ENCODE measurements at regions of chr19 and their contacts with region 1.

Region 1: DNA sequence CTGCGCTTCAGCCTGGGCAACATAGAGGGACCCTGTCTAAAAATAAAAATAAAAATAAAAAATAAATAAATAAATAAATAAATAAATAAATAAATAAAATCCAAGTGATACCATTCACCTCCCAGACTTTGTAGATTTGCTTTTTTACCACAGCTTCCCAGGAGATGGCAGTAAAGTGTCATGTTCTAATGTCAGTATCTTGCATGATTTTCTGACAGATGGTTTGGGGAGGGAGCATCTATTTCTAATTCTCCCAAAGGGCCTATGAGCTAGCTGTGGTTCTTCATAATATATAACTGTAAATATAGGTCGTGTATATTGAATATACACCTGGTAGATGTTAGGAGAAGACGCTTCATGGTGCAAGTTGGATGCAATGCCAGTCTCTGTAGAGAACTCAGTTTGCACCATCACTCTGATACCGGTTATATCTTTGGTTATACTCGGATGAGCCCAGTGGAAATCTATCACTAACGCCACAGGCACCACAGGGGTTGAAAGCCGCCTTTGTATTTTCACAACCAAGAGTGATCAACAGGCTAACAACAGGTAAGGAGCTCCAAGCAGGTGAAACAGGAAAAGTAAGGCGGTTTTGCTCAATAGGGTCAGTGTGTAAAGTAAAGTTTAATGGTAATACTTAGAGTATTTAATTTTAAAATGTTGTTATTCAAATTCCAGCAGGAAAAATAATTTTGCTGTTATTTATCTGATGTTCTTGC is 13.9 kb downstream of the APLP1 start:
- DNase-seq: peak in 3 of 9 experiments; percentile 45 to 83 (median 75)
- ATAC-seq: peak; percentile 68
- H3K4me3 ChIP-seq: no peak overlapping the region
- H3K4me3 Mint-ChIP-seq: no peak overlapping the region
- H3K27ac ChIP-seq: no peak overlapping the region
- H3K27ac Mint-ChIP-seq: no peak overlapping the region
- H3K4me1 ChIP-seq: peaks cover 11% of the 10 kb centered on the region
- H3K4me1 Mint-ChIP-seq: peaks cover 8% of the 10 kb centered on the region
- H3K27me3 ChIP-seq: peaks cover 5 to 20% of the 10 kb centered on the region in 2 experiments
- H3K27me3 Mint-ChIP-seq: peaks cover 16% of the 10 kb centered on the region
- CTCF ChIP-seq: peak; percentile 81

Region 2: GRCh38 chr19:35693830-35694599 is 188.3 kb before region 1 on chr19:
- CTCF ChIA-PET with region 1: interaction called, 3 read pairs
- POLR2A ChIA-PET with region 1: no interaction called
- intact Hi-C with region 1: loop called in 1 of 2 experiments (anchors 1 kb)
- DNase-seq: peak; percentile 80 to 94 (median 91)
- ATAC-seq: peak; percentile 100
- H3K4me3 ChIP-seq: no peak overlapping the region
- H3K4me3 Mint-ChIP-seq: no peak overlapping the region
- H3K27ac ChIP-seq: no peak overlapping the region
- H3K27ac Mint-ChIP-seq: no peak overlapping the region
- H3K4me1 ChIP-seq: no peaks in the 10 kb centered on the region
- H3K4me1 Mint-ChIP-seq: no peaks in the 10 kb centered on the region
- H3K27me3 ChIP-seq: no peaks in the 10 kb centered on the region
- H3K27me3 Mint-ChIP-seq: no peaks in the 10 kb centered on the region
- CTCF ChIP-seq: peak; percentile 99

Region 3: DNA sequence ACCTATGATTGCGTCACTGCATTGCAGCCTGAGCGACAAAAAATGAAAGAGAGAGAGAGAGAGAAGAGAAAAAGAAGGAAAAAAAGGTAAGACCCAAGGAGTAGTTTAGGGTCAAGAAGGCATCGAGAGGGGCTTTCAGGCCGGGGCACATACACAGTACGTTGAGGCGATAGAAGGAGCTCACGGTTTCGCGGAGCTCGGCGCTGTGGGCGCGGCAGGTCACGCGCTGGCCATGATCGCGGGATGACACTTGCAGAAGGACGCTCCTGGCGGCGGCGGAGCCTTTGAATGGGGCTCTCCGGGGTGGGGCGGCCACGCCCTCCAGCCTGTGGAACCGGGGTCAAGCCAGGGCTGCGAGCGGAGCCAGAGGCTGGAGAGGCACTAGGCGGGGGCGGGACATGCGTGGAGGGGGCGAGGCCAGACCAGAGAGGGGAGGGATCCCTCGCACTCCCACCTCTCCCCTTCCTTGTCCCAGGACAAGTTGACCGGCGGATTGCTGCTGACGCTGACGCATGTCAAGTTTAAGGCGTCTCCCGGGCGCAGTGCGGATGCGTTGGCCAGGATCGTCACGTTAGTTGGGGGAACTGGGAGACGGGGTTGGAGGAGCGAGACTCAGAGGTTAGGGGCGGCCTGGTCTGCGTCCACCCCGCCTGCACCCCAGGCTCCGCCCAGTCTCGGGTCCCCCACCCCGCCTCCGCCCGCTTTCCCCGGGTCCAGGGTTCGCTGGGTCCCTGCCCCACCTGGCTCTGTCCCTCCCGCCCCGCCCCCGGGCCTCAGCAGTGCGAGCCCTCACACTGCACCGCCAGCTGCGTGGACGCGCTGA is 36.8 kb before region 1 on chr19:
- CTCF ChIA-PET with region 1: no interaction called
- POLR2A ChIA-PET with region 1: no interaction called
- intact Hi-C with region 1: no loop called
- DNase-seq: no peak
- ATAC-seq: peak; percentile 23
- H3K4me3 ChIP-seq: no peak overlapping the region
- H3K4me3 Mint-ChIP-seq: peak overlapping the region; percentile 79
- H3K27ac ChIP-seq: no peak overlapping the region
- H3K27ac Mint-ChIP-seq: no peak overlapping the region
- H3K4me1 ChIP-seq: peaks cover 7% of the 10 kb centered on the region
- H3K4me1 Mint-ChIP-seq: peaks cover 18% of the 10 kb centered on the region
- H3K27me3 ChIP-seq: peaks cover 21 to 32% of the 10 kb centered on the region in 2 experiments
- H3K27me3 Mint-ChIP-seq: peaks cover 58% of the 10 kb centered on the region
- CTCF ChIP-seq: no peak

Region 4: GRCh38 chr19:35869327-35870123 is 12.7 kb before region 1 on chr19:
- CTCF ChIA-PET with region 1: interaction called, 4 read pairs
- POLR2A ChIA-PET with region 1: interaction called, 3 read pairs
- intact Hi-C with region 1: loop called in 1 of 2 experiments (anchors 1 kb)
- DNase-seq: peak; percentile 51 to 89 (median 72)
- ATAC-seq: peak; percentile 94
- H3K4me3 ChIP-seq: peak overlapping the region; percentile 15 to 32
- H3K4me3 Mint-ChIP-seq: peak overlapping the region; percentile 74
- H3K27ac ChIP-seq: no peak overlapping the region
- H3K27ac Mint-ChIP-seq: no peak overlapping the region
- H3K4me1 ChIP-seq: peaks cover 21% of the 10 kb centered on the region
- H3K4me1 Mint-ChIP-seq: peaks cover 15% of the 10 kb centered on the region
- H3K27me3 ChIP-seq: peaks cover 24 to 30% of the 10 kb centered on the region in 2 experiments
- H3K27me3 Mint-ChIP-seq: peaks cover 33% of the 10 kb centered on the region
- CTCF ChIP-seq: no peak

Region 5: DNA sequence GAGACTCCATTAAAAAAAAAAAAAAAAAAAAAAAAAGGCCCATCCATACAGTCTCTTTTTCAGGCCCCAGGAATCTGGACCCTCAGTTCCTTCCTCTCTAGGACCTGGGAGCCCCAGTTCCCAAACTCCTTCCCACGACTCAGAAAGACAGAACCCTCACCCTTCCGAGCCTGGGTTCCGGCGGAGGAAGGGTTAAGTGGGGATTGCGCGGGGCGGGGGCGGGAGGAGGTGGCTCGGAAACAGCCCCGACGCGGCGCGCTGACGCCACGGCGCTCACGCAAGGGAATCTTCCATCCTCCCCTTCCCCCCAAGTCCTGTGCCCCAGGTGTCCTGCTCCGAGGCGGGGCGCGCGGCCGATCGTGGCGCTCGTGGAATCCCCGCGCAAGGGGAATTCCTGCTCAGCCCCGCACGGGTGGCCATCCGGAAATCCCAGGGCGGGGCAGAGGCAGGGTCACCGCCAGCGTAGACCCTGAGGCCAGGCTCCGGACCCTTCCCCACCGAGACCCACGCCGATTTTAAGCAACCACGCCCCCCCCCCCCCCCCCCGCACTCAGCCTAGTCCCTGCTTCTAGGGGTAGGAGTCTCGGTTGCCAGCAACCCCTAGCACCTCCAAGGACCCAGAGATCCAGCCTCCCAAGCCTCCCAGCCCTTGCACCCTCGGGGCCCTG is 17.4 kb after region 1 on chr19:
- CTCF ChIA-PET with region 1: interaction called, 15 read pairs
- POLR2A ChIA-PET with region 1: interaction called, 4 read pairs
- intact Hi-C with region 1: loop called (anchors 1 to 2 kb)
- DNase-seq: peak; percentile 68 to 97 (median 87)
- ATAC-seq: peak; percentile 59
- H3K4me3 ChIP-seq: peak overlapping the region; percentile 95 to 97
- H3K4me3 Mint-ChIP-seq: peak overlapping the region; percentile 100
- H3K27ac ChIP-seq: peak overlapping the region; percentile 85 to 99
- H3K27ac Mint-ChIP-seq: peak overlapping the region; percentile 95
- H3K4me1 ChIP-seq: peaks cover 45% of the 10 kb centered on the region
- H3K4me1 Mint-ChIP-seq: peaks cover 57% of the 10 kb centered on the region
- H3K27me3 ChIP-seq: no peaks in the 10 kb centered on the region
- H3K27me3 Mint-ChIP-seq: no peaks in the 10 kb centered on the region
- CTCF ChIP-seq: no peak

Region 6: GRCh38 chr19:35925501-35925900 is 43.2 kb after region 1 on chr19:
- CTCF ChIA-PET with region 1: interaction called, 135 read pairs
- POLR2A ChIA-PET with region 1: interaction called, 22 read pairs
- intact Hi-C with region 1: no loop called
- DNase-seq: no peak
- ATAC-seq: no peak
- H3K4me3 ChIP-seq: no peak overlapping the region
- H3K4me3 Mint-ChIP-seq: no peak overlapping the region
- H3K27ac ChIP-seq: no peak overlapping the region
- H3K27ac Mint-ChIP-seq: no peak overlapping the region
- H3K4me1 ChIP-seq: peaks cover 22% of the 10 kb centered on the region
- H3K4me1 Mint-ChIP-seq: peaks cover 22% of the 10 kb centered on the region
- H3K27me3 ChIP-seq: no peaks in the 10 kb centered on the region
- H3K27me3 Mint-ChIP-seq: no peaks in the 10 kb centered on the region
- CTCF ChIP-seq: no peak

Region 7: GRCh38 chr19:35959040-35959967 is 77.0 kb after region 1 on chr19:
- CTCF ChIA-PET with region 1: interaction called, 15 read pairs
- POLR2A ChIA-PET with region 1: no interaction called
- intact Hi-C with region 1: no loop called
- DNase-seq: peak; percentile 60 to 93 (median 82)
- ATAC-seq: peak; percentile 99
- H3K4me3 ChIP-seq: peak overlapping the region; percentile 57 to 62
- H3K4me3 Mint-ChIP-seq: peak overlapping the region; percentile 70
- H3K27ac ChIP-seq: peak overlapping the region in 1 of 2 experiments; percentile 25
- H3K27ac Mint-ChIP-seq: no peak overlapping the region
- H3K4me1 ChIP-seq: peaks cover 43% of the 10 kb centered on the region
- H3K4me1 Mint-ChIP-seq: peaks cover 37% of the 10 kb centered on the region
- H3K27me3 ChIP-seq: peaks cover 0 to 4% of the 10 kb centered on the region in 2 experiments
- H3K27me3 Mint-ChIP-seq: peaks cover 4% of the 10 kb centered on the region
- CTCF ChIP-seq: peak; percentile 77

Measured in CD8-positive, alpha-beta T cell (primary cell).